Activated T-helper 1 cell treated with anti-CD3 and anti-CD28 coated beads, Interleukin-12 subunit alpha, Interleukin-12 subunit beta, Interleukin-2, Interleukin-4 antibody, amounts not matched to agents 30 ng/mL and 10 ng/mL and 1 ng/mL, durations not matched to agents 14 hours and 24 hours and 36 hours (primary cell): ENCODE measurements at regions of chr7 and their contacts with region 1.

Region 1: GRCh38 chr7:128135515-128136214 is 104.4 kb upstream of the LRRC4 start:
- DNase-seq: peak; percentile 53
- H3K4me3 Mint-ChIP-seq: peak overlapping the region; percentile 77
- H3K27ac Mint-ChIP-seq: no peak overlapping the region
- H3K4me1 Mint-ChIP-seq: peaks cover 14% of the 10 kb centered on the region
- H3K27me3 Mint-ChIP-seq: peaks cover 60% of the 10 kb centered on the region

Region 2: DNA sequence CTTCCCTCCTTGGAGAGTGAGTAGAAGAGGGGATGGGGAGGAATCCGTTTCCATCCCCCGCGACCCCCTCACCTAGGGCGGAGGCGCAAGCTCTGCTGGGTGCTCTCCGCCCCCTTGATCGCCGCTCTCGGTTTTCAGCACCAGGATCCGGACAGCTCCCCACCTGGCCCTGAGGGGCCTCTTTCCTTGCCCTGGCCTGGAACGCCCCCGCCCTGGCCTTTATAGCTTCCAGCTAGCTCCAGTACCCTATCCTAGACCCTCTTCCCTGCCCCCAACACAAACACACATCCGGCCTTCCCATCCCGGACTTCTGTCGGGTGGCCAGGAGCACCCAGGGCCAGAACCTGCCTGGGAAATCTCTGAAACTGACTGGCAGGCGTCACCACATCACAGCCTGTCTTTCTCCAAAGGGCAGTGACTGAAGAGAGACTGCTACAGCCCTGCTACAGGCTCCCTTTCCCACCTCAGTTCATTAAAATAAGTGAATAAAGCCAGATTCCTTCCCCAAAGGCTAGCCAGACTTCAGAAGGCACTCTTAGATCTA is 33.1 kb after region 1 on chr7:
- intact Hi-C with region 1: loop called (anchors 1 kb)
- DNase-seq: no peak
- H3K4me3 Mint-ChIP-seq: peak overlapping the region; percentile 31
- H3K27ac Mint-ChIP-seq: no peak overlapping the region
- H3K4me1 Mint-ChIP-seq: peaks cover 22% of the 10 kb centered on the region
- H3K27me3 Mint-ChIP-seq: peaks cover 57% of the 10 kb centered on the region